AG04450 (cell line): ENCODE measurements at regions of chr15 and their contacts with region 1.

Region 1: GRCh38 chr15:38002883-38003477 is 68.5 kb downstream of the TMCO5A start:
- DNase-seq: peak; percentile 55
- H3K4me3 ChIP-seq: no peak overlapping the region
- H3K27ac ChIP-seq: no peak overlapping the region
- H3K27me3 ChIP-seq: peaks cover 3% of the 10 kb centered on the region
- CTCF ChIP-seq: peak; percentile 78

Region 2: DNA sequence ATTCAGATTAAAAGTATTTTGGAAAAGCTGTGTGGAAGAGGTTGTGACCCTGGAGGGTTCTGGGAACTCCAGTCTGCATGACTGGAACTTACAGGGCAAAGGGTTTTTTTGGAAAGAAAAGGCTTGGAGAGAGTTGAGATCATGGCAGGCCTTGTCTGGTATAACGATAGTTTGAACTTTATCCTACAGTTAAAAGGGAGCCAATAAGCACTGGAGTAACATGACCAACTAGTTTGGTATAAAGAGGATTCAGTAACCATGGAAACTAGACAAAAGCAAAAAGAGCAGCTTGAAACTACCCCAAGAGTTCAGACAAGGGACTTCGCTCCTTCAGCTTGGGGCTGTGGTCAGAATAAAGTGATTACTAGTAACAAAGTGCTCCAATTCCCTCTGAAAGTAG is 219.7 kb before region 1 on chr15:
- CTCF ChIA-PET with region 1: no interaction called
- POLR2A ChIA-PET with region 1: no interaction called
- DNase-seq: no peak
- H3K4me3 ChIP-seq: no peak overlapping the region
- H3K27ac ChIP-seq: no peak overlapping the region
- H3K27me3 ChIP-seq: no peaks in the 10 kb centered on the region
- CTCF ChIP-seq: no peak

Region 3: GRCh38 chr15:37813306-37813705 is 189.7 kb before region 1 on chr15:
- CTCF ChIA-PET with region 1: no interaction called
- POLR2A ChIA-PET with region 1: no interaction called
- DNase-seq: no peak
- H3K4me3 ChIP-seq: no peak overlapping the region
- H3K27ac ChIP-seq: no peak overlapping the region
- H3K27me3 ChIP-seq: no peaks in the 10 kb centered on the region
- CTCF ChIP-seq: no peak

Region 4: DNA sequence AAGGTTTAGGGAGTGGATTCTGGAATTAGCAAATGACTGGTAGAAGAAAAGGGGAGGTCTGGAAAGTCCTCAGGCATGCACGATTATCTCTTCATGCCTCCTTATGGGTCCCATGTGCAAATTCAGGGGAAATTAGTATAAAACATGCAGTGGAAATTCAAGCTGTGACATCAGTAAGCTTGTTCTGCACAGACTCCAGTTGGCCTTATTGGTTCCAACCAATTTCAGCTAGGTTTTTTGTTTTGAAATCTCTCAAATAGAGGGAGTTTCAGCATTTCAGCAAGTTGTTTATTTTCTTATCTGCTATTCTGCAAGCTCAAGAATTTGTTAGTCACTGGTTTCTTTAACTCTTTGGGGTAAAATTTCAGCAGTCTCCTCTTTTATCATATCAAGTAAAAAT is 69.3 kb before region 1 on chr15:
- CTCF ChIA-PET with region 1: no interaction called
- POLR2A ChIA-PET with region 1: no interaction called
- DNase-seq: peak; percentile 68
- H3K4me3 ChIP-seq: no peak overlapping the region
- H3K27ac ChIP-seq: peak overlapping the region; percentile 78
- H3K27me3 ChIP-seq: no peaks in the 10 kb centered on the region
- CTCF ChIP-seq: no peak

Region 5: DNA sequence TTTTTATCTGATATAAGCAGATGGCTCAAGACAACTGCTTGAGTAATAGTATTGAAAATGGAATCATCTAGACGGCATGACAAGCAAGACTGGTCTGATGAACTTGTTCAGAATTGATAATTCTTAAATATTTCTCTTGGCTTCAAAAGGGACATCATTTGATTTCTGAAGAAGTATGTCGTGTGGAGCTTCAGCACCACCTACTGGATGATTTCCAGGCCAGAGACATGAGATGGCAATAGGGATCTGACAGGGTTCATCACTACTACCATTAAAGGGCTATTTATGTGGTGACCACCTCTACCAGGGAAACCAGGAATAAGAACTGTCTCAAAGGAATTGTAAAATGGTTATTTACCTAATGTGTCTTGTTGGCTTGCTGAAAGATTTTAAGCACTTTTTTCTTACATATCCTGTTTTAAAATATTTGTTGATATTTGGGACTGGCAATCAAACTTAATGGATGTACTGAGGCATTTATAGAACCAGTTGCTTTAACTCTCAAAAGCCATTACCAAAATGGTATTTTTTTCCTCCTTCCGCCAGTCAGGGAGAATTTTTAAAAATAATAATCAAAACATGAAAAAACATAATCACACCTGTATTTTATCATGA is 351.4 kb after region 1 on chr15:
- CTCF ChIA-PET with region 1: interaction called, 45 read pairs
- POLR2A ChIA-PET with region 1: no interaction called
- DNase-seq: peak; percentile 37
- H3K4me3 ChIP-seq: no peak overlapping the region
- H3K27ac ChIP-seq: no peak overlapping the region
- H3K27me3 ChIP-seq: no peaks in the 10 kb centered on the region
- CTCF ChIP-seq: peak; percentile 82

Region 6: DNA sequence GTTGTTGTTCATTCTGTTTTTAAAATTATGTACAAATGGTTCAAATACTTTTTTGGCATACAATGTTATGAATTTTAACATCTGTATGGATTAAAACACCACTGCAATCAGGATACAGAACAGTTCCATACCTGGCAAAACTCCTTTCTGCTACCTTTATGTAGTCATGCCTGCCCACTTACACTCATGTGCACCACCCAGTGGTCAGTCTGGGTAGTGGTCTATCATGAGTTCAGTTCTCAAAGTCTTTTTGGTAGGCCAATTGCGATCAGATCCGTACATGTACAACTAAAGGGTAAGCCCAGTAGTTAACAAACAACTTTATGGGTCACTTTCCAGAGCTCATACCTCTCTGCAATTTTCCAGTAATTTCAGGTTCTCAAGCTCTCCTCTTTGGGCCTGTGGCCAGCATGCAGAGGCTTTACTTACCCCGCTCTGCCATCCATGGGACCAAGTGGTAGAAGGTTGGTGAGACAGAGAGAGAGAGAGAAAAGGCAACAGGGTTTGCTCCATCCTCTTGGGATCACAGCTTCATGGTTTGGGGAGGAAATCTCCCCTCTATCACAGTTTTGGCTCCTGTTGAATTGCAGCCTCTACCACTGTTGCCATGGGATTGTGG is 387.1 kb after region 1 on chr15:
- CTCF ChIA-PET with region 1: interaction called, 35 read pairs
- POLR2A ChIA-PET with region 1: no interaction called
- DNase-seq: no peak
- H3K4me3 ChIP-seq: no peak overlapping the region
- H3K27ac ChIP-seq: no peak overlapping the region
- H3K27me3 ChIP-seq: no peaks in the 10 kb centered on the region
- CTCF ChIP-seq: peak; percentile 89

Region 7: GRCh38 chr15:38414357-38414756 is 411.4 kb after region 1 on chr15:
- CTCF ChIA-PET with region 1: interaction called, 13 read pairs
- POLR2A ChIA-PET with region 1: no interaction called
- DNase-seq: peak; percentile 46
- H3K4me3 ChIP-seq: no peak overlapping the region
- H3K27ac ChIP-seq: no peak overlapping the region
- H3K27me3 ChIP-seq: peaks cover 20% of the 10 kb centered on the region
- CTCF ChIP-seq: peak; percentile 92

Region 8: GRCh38 chr15:38758043-38758442 is 755.1 kb after region 1 on chr15:
- CTCF ChIA-PET with region 1: interaction called, 10 read pairs
- POLR2A ChIA-PET with region 1: no interaction called
- DNase-seq: peak; percentile 30
- H3K4me3 ChIP-seq: no peak overlapping the region
- H3K27ac ChIP-seq: no peak overlapping the region
- H3K27me3 ChIP-seq: peaks cover 8% of the 10 kb centered on the region
- CTCF ChIP-seq: no peak